ENCODE measurements at regions of chr15 and their contacts with region 1.

Region 1: DNA sequence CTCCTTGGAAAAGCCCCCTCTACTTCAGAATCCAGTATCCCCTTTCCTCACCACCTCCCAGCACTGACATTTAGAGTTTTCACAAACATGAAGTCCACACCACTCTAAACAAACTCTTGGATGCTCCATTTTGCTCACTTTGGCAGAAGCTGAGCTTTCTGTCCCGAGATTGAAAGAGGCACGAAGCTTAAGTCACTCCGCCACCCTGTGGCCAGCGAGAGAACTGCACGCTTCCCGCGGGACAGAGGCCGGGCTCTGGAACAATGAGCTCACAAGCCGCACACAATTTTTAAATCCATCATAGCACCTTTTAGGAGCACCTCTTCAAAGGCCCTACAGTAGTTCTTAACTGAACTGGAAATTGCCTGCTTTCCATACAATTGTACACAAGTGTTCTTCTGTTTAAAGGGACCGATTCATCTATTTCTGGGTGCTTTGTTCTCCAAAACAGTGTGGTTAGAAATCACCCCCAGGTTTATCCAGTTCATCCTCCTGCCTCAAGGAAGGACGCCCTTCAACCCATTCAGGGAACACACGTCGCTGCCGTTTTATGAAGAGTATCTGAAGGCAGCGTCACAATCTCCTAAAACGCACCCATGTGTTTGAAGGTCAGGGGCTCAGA is 226.1 kb downstream of the VPS13C start:
- DNase-seq: peak; percentile 60 to 78
- ATAC-seq: peak; percentile 60 to 73
- H3K4me3 ChIP-seq: no peak overlapping the region
- H3K27ac ChIP-seq: peak overlapping the region in 1 of 4 donors; percentile 35
- H3K4me1 ChIP-seq: peaks cover 0 to 29% of the 10 kb centered on the region in 2 donors
- H3K27me3 ChIP-seq: no peaks in the 10 kb centered on the region
- CTCF ChIP-seq: peak; percentile 71 to 96 (median 91)
- POLR2A ChIP-seq: no peak

Region 2: GRCh38 chr15:60478566-60479360 is 1355.4 kb before region 1 on chr15 and contains the start of gene ICE2:
- in situ Hi-C with region 1: loop called in 1 of 4 experiments (anchors 25 kb)
- intact Hi-C with region 1: no loop called
- DNase-seq: peak; percentile 89 to 93
- ATAC-seq: peak; percentile 85 to 91
- H3K4me3 ChIP-seq: peak within 1 kb of the TSS; percentile 91 to 97 (median 93)
- H3K27ac ChIP-seq: peak within 1 kb of the TSS; percentile 89 to 99 (median 96)
- H3K4me1 ChIP-seq: peaks cover 26 to 40% of the 10 kb centered on the region in 2 donors
- H3K27me3 ChIP-seq: no peaks in the 10 kb centered on the region
- CTCF ChIP-seq: no peak
- POLR2A ChIP-seq: peak; percentile 84 to 94
- total RNA-seq, gene ICE2: 5.8 to 19.0 (median 14.3) TPM

Region 3: DNA sequence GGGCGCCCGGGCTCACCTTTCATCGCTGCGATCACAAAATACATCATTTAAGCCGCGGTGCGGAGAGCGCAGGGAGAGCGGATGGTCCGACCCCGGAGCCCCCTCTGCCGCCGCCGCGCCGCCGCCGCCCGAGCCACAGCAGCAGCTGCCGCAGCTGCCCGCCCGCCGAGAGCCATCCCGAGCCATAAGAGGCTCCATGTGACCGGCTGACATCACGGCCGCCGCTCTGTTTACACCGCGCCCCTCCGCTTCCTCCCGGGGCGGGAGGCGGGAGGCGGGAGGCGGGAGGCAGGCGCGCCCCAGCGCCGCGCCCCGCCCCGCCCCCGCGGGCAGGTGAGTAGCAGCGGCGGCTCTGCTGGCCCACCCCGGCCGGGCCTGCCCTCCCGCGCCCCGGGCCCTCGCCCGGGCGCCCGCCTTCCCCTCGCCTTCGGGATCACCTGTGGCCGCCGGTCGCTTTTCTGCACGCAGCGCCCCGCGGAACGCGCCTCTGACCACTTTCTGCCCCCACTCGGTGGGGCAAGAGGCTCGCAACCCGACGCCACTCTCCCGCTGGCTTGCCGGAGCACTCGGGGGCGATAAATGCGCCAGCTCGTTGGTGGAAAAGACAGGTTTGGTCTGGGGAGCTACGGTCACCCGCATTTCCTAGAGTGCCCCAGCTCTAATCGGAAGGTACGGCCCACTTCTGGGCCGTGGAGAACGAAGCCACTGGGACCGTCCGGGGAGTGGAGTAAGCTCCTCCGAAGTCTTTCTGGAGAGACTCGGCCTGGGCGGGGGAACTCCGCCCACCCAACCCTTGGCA is 1241.6 kb before region 1 on chr15:
- in situ Hi-C with region 1: loop called in 3 of 4 experiments (anchors 10 to 25 kb)
- intact Hi-C with region 1: no loop called
- DNase-seq: peak; percentile 89 to 91
- ATAC-seq: peak; percentile 83 to 84
- H3K4me3 ChIP-seq: peak overlapping the region; percentile 75 to 83 (median 76)
- H3K27ac ChIP-seq: peak overlapping the region; percentile 86 to 98 (median 97)
- H3K4me1 ChIP-seq: peaks cover 32 to 44% of the 10 kb centered on the region in 2 donors
- H3K27me3 ChIP-seq: no peaks in the 10 kb centered on the region
- CTCF ChIP-seq: peak in 4 of 5 experiments; percentile 16 to 17 (median 16)
- POLR2A ChIP-seq: peak; percentile 90 to 95

Region 4: GRCh38 chr15:61155741-61156700 is 678.2 kb before region 1 on chr15:
- in situ Hi-C with region 1: loop called in 3 of 4 experiments (anchors 10 to 25 kb)
- intact Hi-C with region 1: no loop called
- DNase-seq: peak; percentile 63 to 71
- ATAC-seq: peak; percentile 50 to 69
- H3K4me3 ChIP-seq: no peak overlapping the region
- H3K27ac ChIP-seq: peak overlapping the region; percentile 67 to 80 (median 71)
- H3K4me1 ChIP-seq: peaks cover 41 to 50% of the 10 kb centered on the region in 2 donors
- H3K27me3 ChIP-seq: no peaks in the 10 kb centered on the region
- CTCF ChIP-seq: no peak
- POLR2A ChIP-seq: no peak

Region 5: GRCh38 chr15:61530779-61531178 is 303.4 kb before region 1 on chr15:
- in situ Hi-C with region 1: loop called in 1 of 4 experiments (anchors 25 kb)
- intact Hi-C with region 1: no loop called
- DNase-seq: no peak
- ATAC-seq: no peak
- H3K4me3 ChIP-seq: no peak overlapping the region
- H3K27ac ChIP-seq: no peak overlapping the region
- H3K4me1 ChIP-seq: no peaks in the 10 kb centered on the region
- H3K27me3 ChIP-seq: no peaks in the 10 kb centered on the region
- CTCF ChIP-seq: no peak
- POLR2A ChIP-seq: no peak

Region 6: GRCh38 chr15:61682891-61683735 is 151.1 kb before region 1 on chr15:
- in situ Hi-C with region 1: no loop called
- intact Hi-C with region 1: no loop called
- DNase-seq: no peak
- ATAC-seq: no peak
- H3K4me3 ChIP-seq: no peak overlapping the region
- H3K27ac ChIP-seq: peak overlapping the region in 1 of 4 donors; percentile 9
- H3K4me1 ChIP-seq: peaks cover 11 to 24% of the 10 kb centered on the region in 2 donors
- H3K27me3 ChIP-seq: no peaks in the 10 kb centered on the region
- CTCF ChIP-seq: no peak
- POLR2A ChIP-seq: no peak

Region 7: GRCh38 chr15:61702224-61703020 is 131.8 kb before region 1 on chr15:
- in situ Hi-C with region 1: loop called in 1 of 4 experiments (anchors 5 kb)
- intact Hi-C with region 1: loop called (anchors 1 kb)
- DNase-seq: peak; percentile 83 to 95
- ATAC-seq: peak; percentile 89 to 90
- H3K4me3 ChIP-seq: no peak overlapping the region
- H3K27ac ChIP-seq: peak overlapping the region; percentile 59 to 93 (median 77)
- H3K4me1 ChIP-seq: peaks cover 12 to 61% of the 10 kb centered on the region in 2 donors
- H3K27me3 ChIP-seq: no peaks in the 10 kb centered on the region
- CTCF ChIP-seq: peak in 2 of 5 experiments; percentile 13 to 32
- POLR2A ChIP-seq: peak in 1 of 2 donors; percentile 25